ENCODE measurements at regions of chr11 and their contacts with region 1.

Region 1: DNA sequence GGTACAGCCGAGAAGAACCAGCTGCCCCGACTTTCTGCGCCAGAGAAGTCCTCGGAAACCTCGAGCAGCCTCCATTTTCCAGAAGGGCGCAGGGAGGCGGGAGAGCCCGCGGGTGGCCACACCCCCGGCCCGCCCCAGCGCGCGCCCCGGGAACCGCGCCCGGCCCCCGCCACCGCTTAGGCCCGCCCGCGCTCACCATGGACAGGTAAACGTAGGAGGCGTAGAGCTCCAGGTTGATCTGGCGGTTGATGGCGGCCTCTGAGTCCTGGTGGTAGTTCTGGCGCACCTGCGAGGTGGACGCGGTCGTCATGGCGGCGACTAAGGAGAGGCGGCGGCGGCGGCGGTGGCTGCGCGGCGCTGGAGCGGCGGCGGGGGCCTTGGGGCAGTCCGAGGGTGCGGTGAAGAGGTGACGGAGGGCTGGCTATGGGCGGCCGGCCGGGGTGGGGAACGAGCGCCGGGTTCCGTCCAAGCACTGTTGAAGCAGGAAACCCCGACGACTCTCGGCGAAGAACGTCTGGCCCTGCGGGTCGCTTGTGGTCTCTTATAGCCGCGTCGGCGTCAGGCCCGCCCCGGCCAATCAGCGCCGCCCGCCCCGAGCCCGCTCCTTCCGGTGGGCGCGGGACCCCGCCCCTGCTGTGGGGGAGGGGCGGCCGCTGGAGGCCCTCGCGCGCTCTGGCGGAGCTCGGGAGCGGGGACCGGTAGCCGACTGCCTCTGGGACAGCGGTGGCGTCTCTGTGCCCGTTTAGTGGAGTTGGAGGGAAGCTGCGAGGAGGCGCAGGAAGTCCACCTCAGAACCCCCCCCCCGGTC is at the start of gene FTH1:
- DNase-seq: peak; percentile 90
- H3K4me3 ChIP-seq: peak within 1 kb of the TSS; percentile 64 to 98 (median 92)
- H3K27ac ChIP-seq: peak within 1 kb of the TSS; percentile 94
- H3K4me1 ChIP-seq: peaks cover 46% of the 10 kb centered on the region
- H3K27me3 ChIP-seq: no peaks in the 10 kb centered on the region
- CTCF ChIP-seq: no peak
- total RNA-seq, gene FTH1: 2,122 to 4,396 TPM

Region 2: GRCh38 chr11:61881397-61881796 is 85.9 kb before region 1 on chr11:
- CTCF ChIA-PET with region 1: no interaction called
- dilution Hi-C with region 1: loop called (anchors 5 kb)
- in situ Hi-C with region 1: no loop called
- intact Hi-C with region 1: no loop called
- DNase-seq: no peak
- H3K4me3 ChIP-seq: no peak overlapping the region
- H3K27ac ChIP-seq: no peak overlapping the region
- H3K4me1 ChIP-seq: no peaks in the 10 kb centered on the region
- H3K27me3 ChIP-seq: no peaks in the 10 kb centered on the region
- CTCF ChIP-seq: no peak

Region 3: GRCh38 chr11:61980783-61981541 is 13.6 kb after region 1 on chr11:
- CTCF ChIA-PET with region 1: no interaction called
- dilution Hi-C with region 1: no loop called
- in situ Hi-C with region 1: no loop called
- intact Hi-C with region 1: loop called (anchors 1 kb)
- DNase-seq: peak; percentile 67
- H3K4me3 ChIP-seq: no peak overlapping the region
- H3K27ac ChIP-seq: peak overlapping the region; percentile 36
- H3K4me1 ChIP-seq: peaks cover 25% of the 10 kb centered on the region
- H3K27me3 ChIP-seq: no peaks in the 10 kb centered on the region
- CTCF ChIP-seq: no peak

Region 4: DNA sequence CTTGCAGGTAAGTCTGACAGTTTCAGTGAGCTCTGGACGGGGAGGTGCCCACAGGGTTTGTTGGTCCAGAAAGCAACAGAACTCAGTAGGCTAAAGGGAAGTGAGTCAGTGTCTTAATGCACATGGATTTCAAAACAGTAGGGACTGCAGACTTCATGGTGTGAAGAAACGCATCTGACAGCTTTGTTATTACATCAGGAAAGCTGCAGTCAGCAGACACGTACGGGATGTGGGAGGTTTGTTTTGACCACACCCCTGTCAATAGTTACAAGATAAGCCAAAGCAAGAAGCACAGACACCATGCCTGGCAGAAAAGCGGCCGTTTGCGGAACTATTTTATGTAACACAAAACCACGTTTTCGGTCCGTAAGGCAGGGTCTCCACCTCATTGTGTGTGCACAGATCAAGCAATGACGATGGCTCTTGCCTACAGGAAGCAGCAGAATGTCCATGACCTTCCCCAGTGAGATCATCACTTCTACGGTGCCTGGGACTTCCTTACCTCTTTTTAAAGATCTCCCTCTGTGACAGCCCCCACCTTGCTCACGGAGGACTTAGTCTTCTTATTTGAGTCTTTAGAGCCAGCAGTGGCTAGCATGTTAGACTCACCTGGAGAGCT is 58.3 kb after region 1 on chr11:
- CTCF ChIA-PET with region 1: no interaction called
- dilution Hi-C with region 1: no loop called
- in situ Hi-C with region 1: no loop called
- intact Hi-C with region 1: loop called (anchors 1 kb)
- DNase-seq: peak; percentile 98
- H3K4me3 ChIP-seq: no peak overlapping the region
- H3K27ac ChIP-seq: peak overlapping the region; percentile 87
- H3K4me1 ChIP-seq: peaks cover 14% of the 10 kb centered on the region
- H3K27me3 ChIP-seq: no peaks in the 10 kb centered on the region
- CTCF ChIP-seq: no peak

Region 5: DNA sequence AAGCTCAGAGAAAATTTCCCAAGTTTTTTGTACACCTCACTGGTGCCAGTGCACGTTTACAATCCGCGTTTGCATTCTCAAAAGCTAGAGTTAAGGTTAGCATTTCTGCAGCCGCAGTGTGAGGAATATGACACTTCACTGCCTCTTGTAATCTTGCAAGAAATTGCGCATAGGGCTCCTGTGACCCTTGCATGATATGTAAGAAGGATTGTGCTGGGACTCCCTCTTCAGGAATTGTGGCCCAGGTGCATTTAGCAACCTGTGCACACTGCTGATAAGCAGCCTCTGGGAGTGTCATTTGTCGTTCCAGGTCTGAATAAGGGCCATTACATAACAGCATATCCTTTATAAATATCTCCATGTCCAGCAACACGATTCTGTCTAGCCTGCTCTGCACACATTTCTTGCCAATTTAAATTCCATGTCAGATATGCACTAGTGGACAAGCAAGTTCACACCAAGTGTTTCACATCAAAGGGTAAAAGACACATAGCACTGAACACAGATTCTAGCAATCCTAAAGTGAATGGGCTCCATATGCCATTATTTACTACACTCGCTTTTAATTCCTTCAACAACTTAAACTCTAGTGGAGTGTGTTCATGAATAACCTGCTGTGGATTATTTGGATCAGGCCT is 87.3 kb after region 1 on chr11:
- CTCF ChIA-PET with region 1: no interaction called
- dilution Hi-C with region 1: no loop called
- in situ Hi-C with region 1: loop called (anchors 5 kb)
- intact Hi-C with region 1: loop called (anchors 1 kb)
- DNase-seq: peak; percentile 42
- H3K4me3 ChIP-seq: no peak overlapping the region
- H3K27ac ChIP-seq: no peak overlapping the region
- H3K4me1 ChIP-seq: peaks cover 8% of the 10 kb centered on the region
- H3K27me3 ChIP-seq: no peaks in the 10 kb centered on the region
- CTCF ChIP-seq: peak; percentile 74 to 87

Region 6: GRCh38 chr11:62108017-62108750 is 140.9 kb after region 1 on chr11:
- CTCF ChIA-PET with region 1: no interaction called
- dilution Hi-C with region 1: loop called (anchors 5 kb)
- in situ Hi-C with region 1: no loop called
- intact Hi-C with region 1: no loop called
- DNase-seq: peak; percentile 42
- H3K4me3 ChIP-seq: no peak overlapping the region
- H3K27ac ChIP-seq: no peak overlapping the region
- H3K4me1 ChIP-seq: peaks cover 7% of the 10 kb centered on the region
- H3K27me3 ChIP-seq: no peaks in the 10 kb centered on the region
- CTCF ChIP-seq: peak; percentile 76 to 77

Measured in mammary epithelial cell (primary cell).